Right ventricle myocardium inferior (tissue), 1 donor: ENCODE measurements at regions of chr21 and their contacts with region 1.

Region 1: DNA sequence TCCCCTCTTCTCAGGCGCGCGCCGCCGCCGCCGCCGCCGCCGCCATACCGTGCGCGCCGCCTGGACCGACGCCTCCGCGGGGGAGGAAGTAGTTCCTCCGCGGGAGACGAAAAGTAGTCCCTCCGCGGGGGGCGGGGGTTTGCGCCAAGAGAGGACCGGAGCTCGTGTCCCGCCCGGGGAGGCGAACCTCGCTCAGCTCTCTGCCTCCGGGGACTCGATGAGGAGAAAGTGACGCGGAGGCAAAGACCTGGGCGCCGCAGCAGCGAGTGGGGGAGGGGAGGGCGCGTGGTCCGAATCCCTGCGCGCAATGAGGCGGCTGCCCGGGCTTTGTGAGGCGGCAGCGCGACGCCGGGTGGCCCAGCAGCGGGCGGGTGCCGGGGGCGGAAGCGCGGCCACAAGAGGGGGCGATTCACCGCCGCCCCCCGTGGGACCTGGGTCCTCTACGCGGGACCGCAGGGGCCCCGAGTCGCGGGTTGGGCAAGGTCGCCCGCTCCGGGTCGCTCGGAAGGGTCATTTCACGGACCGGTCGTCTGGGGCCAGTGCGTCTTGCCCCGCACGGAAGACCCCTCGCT is at the start of gene BRWD1:
- DNase-seq: peak; percentile 93
- ATAC-seq: peak; percentile 84
- total RNA-seq, gene BRWD1: 29.1 TPM

Region 2: DNA sequence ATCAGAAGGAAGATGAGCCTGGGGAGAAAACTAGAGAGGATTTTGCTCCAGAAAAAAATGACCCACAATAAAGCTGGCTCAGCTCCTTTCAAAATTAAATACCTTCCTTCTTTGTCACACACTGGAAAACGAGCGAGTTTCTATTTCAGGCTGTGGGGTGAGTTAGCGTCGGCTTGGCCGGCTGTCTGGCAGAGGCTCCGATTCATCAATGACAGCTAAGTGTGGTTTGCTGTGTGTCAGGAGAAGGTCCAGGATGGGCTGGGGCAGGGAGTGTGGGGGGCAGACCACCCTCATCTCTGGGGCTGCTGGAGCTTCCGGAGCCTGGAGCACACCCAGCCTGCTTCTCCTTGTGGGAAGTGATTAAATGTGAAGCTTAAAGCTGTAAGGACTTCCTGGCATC is 387.7 kb before region 1 on chr21:
- intact Hi-C with region 1: no loop called
- DNase-seq: no peak
- ATAC-seq: peak; percentile 81

Region 3: GRCh38 chr21:39183237-39184007 is 130.2 kb before region 1 on chr21 and contains the start of gene PSMG1:
- intact Hi-C with region 1: no loop called
- DNase-seq: peak; percentile 99
- ATAC-seq: peak; percentile 99
- total RNA-seq, gene PSMG1: 18.8 TPM

Region 4: DNA sequence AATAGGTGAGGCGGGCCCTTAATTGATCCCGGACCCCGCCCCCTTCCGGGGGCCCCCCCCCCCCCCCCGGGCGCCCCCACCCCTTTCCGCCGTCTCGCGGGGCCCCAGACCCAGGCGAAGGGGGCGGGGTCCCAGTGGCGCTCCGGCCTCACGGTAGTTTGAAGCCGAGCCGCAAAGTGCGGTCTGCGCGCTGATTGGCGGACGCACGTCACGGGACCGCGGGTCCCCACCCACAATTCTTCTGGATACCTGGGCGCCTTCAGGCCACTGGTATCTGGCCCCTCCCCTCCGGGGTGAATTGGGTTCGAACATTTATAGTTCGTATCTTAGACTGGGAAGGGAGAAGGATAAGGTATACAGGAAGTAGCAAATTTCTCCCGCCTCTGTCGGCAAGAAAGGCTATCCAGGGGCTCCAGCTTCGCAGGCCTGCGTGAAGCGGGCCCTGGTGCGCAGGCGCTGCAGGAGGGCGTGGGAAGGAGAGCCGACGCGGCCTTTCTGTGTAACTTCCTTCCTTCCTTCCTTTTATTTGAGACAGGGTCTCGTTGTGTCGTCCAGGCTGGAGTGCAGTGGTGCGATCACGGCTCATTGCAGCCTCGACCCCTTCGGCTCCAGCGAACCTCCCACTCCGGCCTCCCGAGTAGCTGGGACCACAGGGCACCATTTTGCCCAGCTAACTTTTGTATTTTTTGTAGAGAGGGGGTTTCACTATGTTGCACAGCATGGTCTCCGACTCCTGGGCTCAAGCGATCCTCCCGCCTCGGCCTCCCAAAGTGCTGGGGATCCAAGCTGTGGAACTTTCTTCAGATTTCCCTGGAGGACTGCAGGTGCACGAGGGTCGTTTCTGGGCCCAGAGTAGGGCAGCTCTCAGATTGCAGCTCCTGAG is 35.8 kb after region 1 on chr21:
- intact Hi-C with region 1: loop called (anchors 2 kb)
- DNase-seq: peak; percentile 98
- ATAC-seq: peak; percentile 96

Region 5: GRCh38 chr21:39379986-39380891 is 66.6 kb after region 1 on chr21:
- intact Hi-C with region 1: loop called (anchors 2 kb)
- DNase-seq: peak; percentile 99
- ATAC-seq: peak; percentile 99

Region 6: GRCh38 chr21:39445321-39446269 is 131.9 kb after region 1 on chr21 and contains the start of gene LCA5L:
- intact Hi-C with region 1: loop called (anchors 2 kb)
- DNase-seq: peak; percentile 97
- ATAC-seq: peak; percentile 97
- total RNA-seq, gene LCA5L: 0.46 TPM